ENCODE measurements at regions of chr1 and their contacts with region 1.

Region 1: GRCh38 chr1:30823969-30824735 is 66.6 kb upstream of the LAPTM5 start:
- DNase-seq: peak; percentile 97

Region 2: GRCh38 chr1:30778154-30778978 is 45.8 kb before region 1 on chr1:
- in situ Hi-C with region 1: no loop called
- DNase-seq: peak; percentile 95

Region 3: GRCh38 chr1:30911046-30911954 is 87.1 kb after region 1 on chr1:
- in situ Hi-C with region 1: loop called (anchors 25 kb)
- DNase-seq: peak; percentile 64